GM10248 (cell line): ENCODE measurements at regions of chr11 and their contacts with region 1.

Region 1: GRCh38 chr11:121334973-121335710 is 42.6 kb downstream of the SC5D start:
- DNase-seq: no peak
- CTCF ChIP-seq: no peak

Region 2: GRCh38 chr11:120710354-120711131 is 624.6 kb before region 1 on chr11:
- CTCF ChIA-PET with region 1: no interaction called
- POLR2A ChIA-PET with region 1: no interaction called
- DNase-seq: no peak
- CTCF ChIP-seq: no peak

Region 3: DNA sequence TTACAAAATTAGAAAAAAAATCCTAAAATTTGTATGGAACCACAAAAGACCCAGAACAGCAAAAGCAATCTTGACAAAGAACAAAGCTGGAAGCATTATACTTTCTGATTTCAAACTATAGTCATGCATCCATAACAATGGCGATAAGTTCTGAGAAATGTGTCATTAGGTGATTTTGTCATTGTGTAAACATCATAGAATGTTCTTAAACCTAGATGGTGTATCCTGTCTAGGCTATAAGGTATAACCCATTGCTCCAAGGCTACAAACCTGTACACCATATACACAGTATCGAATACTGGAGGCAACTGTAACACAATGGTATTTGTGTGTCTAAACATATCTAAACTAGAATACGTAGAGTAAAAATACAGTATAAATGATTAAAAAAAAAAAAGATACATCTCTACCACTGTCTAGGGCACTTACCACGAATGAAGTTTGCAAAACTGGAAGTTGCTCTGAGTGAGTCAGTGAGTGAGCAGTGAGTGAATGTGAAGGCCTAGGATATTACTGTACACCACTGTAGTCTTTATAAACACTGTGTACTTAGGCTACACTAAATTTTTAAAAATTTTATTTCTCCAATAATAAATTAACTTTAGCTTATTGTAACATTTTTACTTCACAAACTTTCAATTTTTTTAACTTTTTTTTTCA is 60.7 kb before region 1 on chr11:
- CTCF ChIA-PET with region 1: no interaction called
- POLR2A ChIA-PET with region 1: no interaction called
- DNase-seq: no peak
- CTCF ChIP-seq: no peak

Region 4: GRCh38 chr11:121318848-121319834 is 16.0 kb before region 1 on chr11:
- CTCF ChIA-PET with region 1: interaction called, 17 read pairs
- POLR2A ChIA-PET with region 1: no interaction called
- DNase-seq: no peak
- CTCF ChIP-seq: peak; percentile 84